BJ (cell line): ENCODE measurements at regions of chr11 and their contacts with region 1.

Region 1: DNA sequence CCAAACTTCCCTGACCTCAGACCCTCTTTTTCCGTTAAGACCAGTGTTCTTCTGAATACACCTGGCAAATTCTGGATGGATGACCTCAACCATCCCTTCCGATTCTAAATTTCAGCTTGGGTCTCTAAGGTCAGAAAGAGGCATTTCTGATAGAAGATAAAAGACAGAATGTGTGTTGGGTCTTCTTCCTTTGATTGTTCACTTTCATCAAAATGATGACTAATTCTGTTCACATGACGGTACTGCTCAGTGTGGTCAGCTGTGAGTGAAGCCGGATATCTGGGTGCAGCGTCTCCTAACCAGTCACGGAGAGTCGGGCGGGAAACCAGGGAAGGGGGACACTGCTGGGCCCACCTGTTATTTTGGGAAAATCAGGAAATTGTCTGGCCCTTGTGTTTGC is 151.6 kb upstream of the NAV2 start:
- DNase-seq: no peak
- H3K4me3 ChIP-seq: no peak overlapping the region
- H3K27me3 ChIP-seq: no peaks in the 10 kb centered on the region
- CTCF ChIP-seq: no peak

Region 2: GRCh38 chr11:19474954-19475715 is 85.9 kb before region 1 on chr11:
- CTCF ChIA-PET with region 1: no interaction called
- POLR2A ChIA-PET with region 1: no interaction called
- DNase-seq: no peak
- H3K4me3 ChIP-seq: no peak overlapping the region
- H3K27me3 ChIP-seq: peaks cover 21% of the 10 kb centered on the region
- CTCF ChIP-seq: no peak

Region 3: DNA sequence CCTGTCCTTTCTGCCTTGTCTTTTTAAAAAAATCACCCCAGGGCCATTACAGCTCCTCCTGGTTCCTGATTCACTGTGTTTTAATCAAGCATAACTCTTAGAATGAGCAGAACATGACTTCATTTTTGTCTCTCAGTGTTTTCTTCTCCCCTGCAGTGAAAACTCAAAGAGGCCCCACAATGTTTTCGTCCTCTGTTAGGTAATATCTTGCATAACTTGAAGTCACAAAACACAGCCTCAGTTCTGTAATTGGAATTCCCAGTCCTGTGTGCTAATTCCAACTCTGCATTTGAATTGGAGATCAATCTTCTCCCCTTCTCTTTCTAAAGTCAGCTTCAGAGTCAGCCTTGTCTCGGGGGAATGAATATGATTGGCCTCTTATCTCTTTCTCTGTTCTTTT is 34.9 kb before region 1 on chr11:
- CTCF ChIA-PET with region 1: no interaction called
- POLR2A ChIA-PET with region 1: no interaction called
- DNase-seq: no peak
- H3K4me3 ChIP-seq: no peak overlapping the region
- H3K27me3 ChIP-seq: peaks cover 8% of the 10 kb centered on the region
- CTCF ChIP-seq: no peak

Region 4: GRCh38 chr11:19577976-19578619 is 17.1 kb after region 1 on chr11:
- CTCF ChIA-PET with region 1: interaction called, 46 read pairs
- POLR2A ChIA-PET with region 1: no interaction called
- DNase-seq: peak; percentile 85
- H3K4me3 ChIP-seq: no peak overlapping the region
- H3K27me3 ChIP-seq: no peaks in the 10 kb centered on the region
- CTCF ChIP-seq: 0 out of 2 replicates have a peak, but pooled peaks have one; percentile 5

Region 5: DNA sequence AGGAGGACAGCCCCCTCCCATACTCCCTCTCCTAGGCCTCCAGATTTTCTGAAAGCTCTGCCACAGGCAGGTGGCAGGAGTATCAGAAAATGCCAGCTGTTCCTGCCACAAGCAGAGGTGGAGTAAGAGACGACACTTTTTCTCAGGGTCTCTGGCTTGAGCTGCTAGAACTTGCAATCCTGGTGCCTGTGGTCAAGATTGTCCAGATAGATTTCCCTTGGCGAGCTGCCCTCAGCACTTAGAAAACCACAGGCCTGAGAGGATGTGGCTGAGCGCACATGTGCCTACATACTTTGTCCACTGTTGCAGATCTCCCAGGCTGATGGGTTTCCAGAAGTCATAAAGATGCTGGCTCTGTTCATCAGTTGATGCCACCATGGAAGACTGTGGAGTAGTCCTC is 85.9 kb after region 1 on chr11:
- CTCF ChIA-PET with region 1: interaction called, 28 read pairs
- POLR2A ChIA-PET with region 1: no interaction called
- DNase-seq: peak; percentile 95
- H3K4me3 ChIP-seq: no peak overlapping the region
- H3K27me3 ChIP-seq: peaks cover 7% of the 10 kb centered on the region
- CTCF ChIP-seq: peak; percentile 39

Region 6: GRCh38 chr11:19723572-19724342 is 162.7 kb after region 1 on chr11:
- CTCF ChIA-PET with region 1: interaction called, 10 read pairs
- POLR2A ChIA-PET with region 1: no interaction called
- DNase-seq: peak; percentile 31
- H3K4me3 ChIP-seq: no peak overlapping the region
- H3K27me3 ChIP-seq: no peaks in the 10 kb centered on the region
- CTCF ChIP-seq: no peak

Region 7: GRCh38 chr11:19742588-19743292 is 181.7 kb after region 1 on chr11:
- CTCF ChIA-PET with region 1: interaction called, 138 read pairs
- POLR2A ChIA-PET with region 1: interaction called, 3 read pairs
- DNase-seq: no peak
- H3K4me3 ChIP-seq: no peak overlapping the region
- H3K27me3 ChIP-seq: no peaks in the 10 kb centered on the region
- CTCF ChIP-seq: peak; percentile 84